ENCODE measurements at regions of chrX and their contacts with region 1.

Region 1: DNA sequence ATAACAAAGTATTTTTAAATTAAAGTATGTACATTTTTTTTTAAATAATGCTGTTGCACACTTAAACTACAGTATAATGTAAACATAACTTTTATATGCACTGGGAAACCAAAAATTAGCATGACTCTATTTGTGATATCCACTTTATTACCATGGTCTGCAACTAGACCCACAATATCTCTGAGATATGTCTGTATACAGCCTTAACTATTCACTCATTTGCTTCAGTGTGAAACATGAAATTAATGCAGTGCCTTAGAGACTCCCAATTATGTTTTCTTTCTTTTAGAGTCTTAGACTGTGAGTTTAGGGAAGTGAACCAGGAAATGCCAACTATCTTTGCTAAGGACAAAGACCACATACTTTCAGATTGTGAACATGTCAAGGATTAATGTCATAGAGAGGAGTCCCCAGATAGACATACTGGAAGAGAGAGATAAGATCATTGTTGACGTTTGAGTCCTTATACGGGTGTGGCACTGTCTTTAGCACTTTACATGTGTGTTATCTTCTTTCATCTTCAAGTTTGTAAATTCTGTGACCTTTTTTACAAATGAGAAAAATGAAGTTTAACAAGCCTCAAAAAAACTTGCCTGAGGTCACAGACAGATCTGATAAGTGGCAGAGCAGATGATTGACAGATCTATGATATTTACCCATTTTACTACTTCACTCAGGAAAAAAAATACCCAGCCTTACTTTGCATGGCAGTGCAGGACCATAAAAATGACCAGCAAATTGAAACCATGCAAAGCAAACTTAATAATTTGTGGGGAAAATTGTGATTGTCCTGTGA is 23.3 kb downstream of the CXorf58 start:
- DNase-seq: peak in 7 of 9 donors; percentile 10 to 58 (median 32)
- ATAC-seq: peak; percentile 83
- H3K4me3 ChIP-seq: no peak overlapping the region
- H3K4me3 Mint-ChIP-seq: peak overlapping the region in 9 of 10 donors; percentile 12 to 68 (median 48)
- H3K27ac ChIP-seq: peak overlapping the region; percentile 57
- H3K27ac Mint-ChIP-seq: peak overlapping the region in 8 of 9 donors; percentile 65 to 91 (median 84)
- H3K4me1 ChIP-seq: peaks cover 4 to 10% of the 10 kb centered on the region in 2 donors
- H3K4me1 Mint-ChIP-seq: peaks cover 4 to 21% (median 17%) of the 10 kb centered on the region in 7 donors
- H3K27me3 ChIP-seq: no peaks in the 10 kb centered on the region
- H3K27me3 Mint-ChIP-seq: no peaks in the 10 kb centered on the region

Region 2: DNA sequence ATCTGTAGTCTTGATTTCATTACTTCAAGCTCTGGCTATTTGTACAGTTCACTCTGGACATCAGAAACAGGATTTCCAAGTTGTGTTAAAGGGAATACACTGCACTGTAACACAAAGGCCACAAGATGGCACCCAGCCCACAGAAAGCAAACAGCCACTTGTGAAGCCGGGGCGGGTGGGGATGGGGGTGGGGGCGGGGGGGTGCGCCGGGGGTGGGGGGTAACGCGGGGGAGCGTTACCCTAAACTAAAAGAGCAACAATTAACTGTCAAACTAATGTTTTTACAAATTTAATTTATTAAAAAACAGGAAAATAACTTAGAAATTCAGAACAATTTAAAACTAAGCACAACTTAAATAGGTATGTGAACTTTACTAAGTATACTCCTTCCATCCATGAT is 236.5 kb before region 1 on chrX:
- CTCF ChIA-PET with region 1: no interaction called
- POLR2A ChIA-PET with region 1: no interaction called
- intact Hi-C with region 1: no loop called
- DNase-seq: peak in 7 of 9 donors; percentile 7 to 40 (median 34)
- ATAC-seq: peak; percentile 78
- H3K4me3 ChIP-seq: no peak overlapping the region
- H3K4me3 Mint-ChIP-seq: no peak overlapping the region
- H3K27ac ChIP-seq: no peak overlapping the region
- H3K27ac Mint-ChIP-seq: no peak overlapping the region
- H3K4me1 ChIP-seq: no peaks in the 10 kb centered on the region
- H3K4me1 Mint-ChIP-seq: peaks cover 0 to 4% (median 0%) of the 10 kb centered on the region in 7 donors
- H3K27me3 ChIP-seq: no peaks in the 10 kb centered on the region
- H3K27me3 Mint-ChIP-seq: no peaks in the 10 kb centered on the region

Region 3: GRCh38 chrX:23952984-23953907 is 22.2 kb after region 1 on chrX:
- CTCF ChIA-PET with region 1: no interaction called
- POLR2A ChIA-PET with region 1: interaction called, 3 read pairs
- intact Hi-C with region 1: loop called in 1 of 2 experiments (anchors 2 kb)
- DNase-seq: peak in 8 of 9 donors; percentile 31 to 63 (median 46)
- ATAC-seq: peak; percentile 93
- H3K4me3 ChIP-seq: peak overlapping the region; percentile 84
- H3K4me3 Mint-ChIP-seq: peak overlapping the region; percentile 72 to 97 (median 88)
- H3K27ac ChIP-seq: peak overlapping the region; percentile 80
- H3K27ac Mint-ChIP-seq: peak overlapping the region; percentile 78 to 99 (median 91)
- H3K4me1 ChIP-seq: peaks cover 0 to 12% of the 10 kb centered on the region in 2 donors
- H3K4me1 Mint-ChIP-seq: peaks cover 7 to 55% (median 20%) of the 10 kb centered on the region in 7 donors
- H3K27me3 ChIP-seq: no peaks in the 10 kb centered on the region
- H3K27me3 Mint-ChIP-seq: no peaks in the 10 kb centered on the region

Region 4: DNA sequence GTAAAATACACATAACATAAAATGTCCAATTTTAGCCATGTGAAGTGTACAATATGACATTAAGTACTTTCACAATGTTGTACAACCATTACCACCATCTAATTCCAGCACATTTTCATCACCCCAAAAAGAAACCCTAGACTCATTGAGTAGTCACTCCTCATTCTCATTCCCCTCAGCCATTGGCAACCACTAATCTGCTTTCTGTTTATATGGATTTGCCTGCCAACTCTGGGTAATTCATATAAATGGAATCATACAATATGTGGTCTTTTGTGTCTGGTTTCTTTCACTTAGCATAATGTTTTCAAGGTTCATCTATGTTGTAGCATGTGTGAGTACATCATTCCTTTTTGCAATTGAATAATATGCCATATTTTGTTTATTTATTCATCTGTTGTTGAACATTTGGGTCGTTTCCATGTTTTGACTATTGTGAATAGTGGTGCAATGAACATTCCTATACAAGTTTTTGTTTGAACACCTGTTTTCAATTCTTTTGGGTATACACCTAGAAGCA is 166.7 kb after region 1 on chrX:
- CTCF ChIA-PET with region 1: no interaction called
- POLR2A ChIA-PET with region 1: no interaction called
- intact Hi-C with region 1: no loop called
- DNase-seq: no peak
- ATAC-seq: no peak
- H3K4me3 ChIP-seq: no peak overlapping the region
- H3K4me3 Mint-ChIP-seq: no peak overlapping the region
- H3K27ac ChIP-seq: no peak overlapping the region
- H3K27ac Mint-ChIP-seq: no peak overlapping the region
- H3K4me1 ChIP-seq: no peaks in the 10 kb centered on the region
- H3K4me1 Mint-ChIP-seq: peaks cover 0 to 13% (median 0%) of the 10 kb centered on the region in 7 donors
- H3K27me3 ChIP-seq: no peaks in the 10 kb centered on the region
- H3K27me3 Mint-ChIP-seq: no peaks in the 10 kb centered on the region